Panc1 (cell line): ENCODE measurements at regions of chr17 and their contacts with region 1.

Region 1: DNA sequence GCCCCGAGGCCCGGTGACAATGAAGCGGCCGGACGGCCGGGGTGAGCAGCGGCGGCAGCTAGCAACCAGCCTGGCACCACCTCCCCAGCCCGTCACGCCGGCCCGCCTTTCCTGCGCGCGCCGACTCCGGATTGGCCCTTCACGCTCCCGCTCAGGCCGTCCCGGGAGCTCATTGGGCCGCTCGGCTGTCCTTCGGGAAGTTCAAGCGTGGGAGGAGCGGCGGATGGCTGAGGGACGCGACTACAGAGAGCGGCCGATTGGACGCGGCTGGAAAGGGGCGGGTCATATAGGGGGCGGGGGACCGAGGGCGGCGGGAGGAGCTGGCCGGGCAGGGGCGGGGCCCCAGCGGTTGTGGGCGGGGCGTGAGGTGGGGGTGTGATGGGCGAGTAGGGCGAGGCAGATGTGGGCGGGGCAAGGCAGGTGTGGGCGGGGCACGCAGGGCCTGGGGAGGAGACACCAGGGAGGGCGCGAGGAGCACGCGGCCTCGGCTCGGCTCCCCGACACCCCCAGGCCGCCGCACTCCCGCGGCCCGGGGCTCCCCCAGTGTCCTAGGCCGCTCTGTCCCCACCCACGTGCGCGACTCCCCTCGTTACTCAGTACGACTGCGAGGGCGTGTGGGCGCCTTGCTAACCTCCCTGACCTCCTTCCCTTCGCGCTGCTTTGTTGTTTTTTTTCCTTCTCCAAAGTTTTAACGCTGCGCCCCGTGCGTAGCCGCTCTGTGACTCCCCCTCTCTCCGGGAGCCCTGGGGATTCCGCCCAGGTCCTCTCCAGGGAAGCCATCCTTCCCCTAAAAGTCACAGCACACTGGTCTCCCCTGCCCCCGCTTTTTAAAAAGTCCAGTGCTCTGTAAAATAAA is at the start of gene CEP131:
- DNase-seq: peak; percentile 77
- ATAC-seq: peak; percentile 99
- H3K4me3 ChIP-seq: peak within 1 kb of the TSS; percentile 76 to 81
- H3K27ac ChIP-seq: peak within 1 kb of the TSS; percentile 80
- H3K4me1 ChIP-seq: peaks cover 13% of the 10 kb centered on the region
- H3K27me3 ChIP-seq: no peaks in the 10 kb centered on the region
- CTCF ChIP-seq: no peak
- total RNA-seq, gene CEP131: 26.0 TPM

Region 2: GRCh38 chr17:80989586-80989913 is 233.6 kb before region 1 on chr17:
- CTCF ChIA-PET with region 1: interaction called, 17 read pairs
- POLR2A ChIA-PET with region 1: no interaction called
- in situ Hi-C with region 1: no loop called
- intact Hi-C with region 1: no loop called
- DNase-seq: no peak
- ATAC-seq: peak; percentile 12
- H3K4me3 ChIP-seq: peak overlapping the region; percentile 26 to 55
- H3K27ac ChIP-seq: peak overlapping the region; percentile 36; the same call in 1 of the 2 replicates
- H3K4me1 ChIP-seq: peaks cover 22% of the 10 kb centered on the region
- H3K27me3 ChIP-seq: no peaks in the 10 kb centered on the region
- CTCF ChIP-seq: no peak

Region 3: DNA sequence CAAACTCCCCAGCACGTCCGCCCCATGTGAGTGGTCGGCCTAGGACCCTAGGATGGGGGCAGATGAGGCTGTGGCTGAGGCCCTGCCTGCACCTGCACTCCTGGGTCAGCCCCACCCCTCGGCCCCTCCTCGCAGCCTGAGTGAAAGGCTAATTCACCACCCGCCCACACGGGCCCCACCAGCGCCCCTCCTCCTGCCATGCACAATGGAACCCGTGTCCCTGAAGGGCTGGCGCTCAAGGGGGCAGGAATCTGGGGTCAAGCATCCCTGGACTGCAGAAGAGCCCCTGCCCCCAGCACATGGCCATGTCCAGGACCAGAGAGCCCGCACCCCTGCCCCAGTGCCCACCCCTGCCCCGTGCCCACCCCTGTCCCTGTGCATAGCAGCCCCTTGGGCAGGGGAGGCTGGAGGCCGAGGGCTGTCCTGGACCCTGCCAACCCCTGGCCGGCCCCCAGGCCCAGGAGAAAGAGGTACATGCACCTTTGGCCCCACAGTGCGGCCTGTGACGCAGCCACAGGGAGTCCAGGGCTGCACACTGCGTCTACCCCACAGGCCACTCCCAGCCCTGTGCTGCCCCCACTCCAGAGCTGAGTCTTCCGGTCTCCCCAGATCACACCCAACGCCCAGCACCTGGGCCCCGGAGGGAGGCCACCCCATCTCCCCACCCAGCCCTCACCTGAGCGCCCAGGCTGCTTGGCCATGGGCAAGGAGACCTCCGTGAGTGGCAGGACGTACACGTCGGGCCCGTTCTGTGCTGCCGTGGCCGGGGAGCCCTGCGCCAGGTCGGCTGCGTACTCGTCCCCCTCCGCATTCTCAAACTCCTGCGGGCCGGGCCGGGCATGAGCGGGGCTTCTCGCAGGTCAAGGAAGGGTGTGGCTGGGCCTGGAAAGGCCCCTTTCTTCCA is 92.5 kb before region 1 on chr17:
- CTCF ChIA-PET with region 1: no interaction called
- POLR2A ChIA-PET with region 1: interaction called, 18 read pairs
- in situ Hi-C with region 1: no loop called
- intact Hi-C with region 1: no loop called
- DNase-seq: no peak
- ATAC-seq: no peak
- H3K4me3 ChIP-seq: no peak overlapping the region
- H3K27ac ChIP-seq: no peak overlapping the region
- H3K4me1 ChIP-seq: peaks cover 11% of the 10 kb centered on the region
- H3K27me3 ChIP-seq: no peaks in the 10 kb centered on the region
- CTCF ChIP-seq: no peak

Region 4: GRCh38 chr17:81171941-81172340 is 51.2 kb before region 1 on chr17:
- CTCF ChIA-PET with region 1: no interaction called
- POLR2A ChIA-PET with region 1: no interaction called
- in situ Hi-C with region 1: no loop called
- intact Hi-C with region 1: no loop called
- DNase-seq: no peak
- ATAC-seq: no peak
- H3K4me3 ChIP-seq: no peak overlapping the region
- H3K27ac ChIP-seq: no peak overlapping the region
- H3K4me1 ChIP-seq: no peaks in the 10 kb centered on the region
- H3K27me3 ChIP-seq: no peaks in the 10 kb centered on the region
- CTCF ChIP-seq: no peak